Mammary epithelial cell (primary cell): ENCODE measurements at regions of chr21 and their contacts with region 1.

Region 1: GRCh38 chr21:34801519-34802132 is 132.8 kb downstream of the CLIC6 start:
- DNase-seq: no peak
- H3K4me3 ChIP-seq: no peak overlapping the region
- H3K27ac ChIP-seq: peak overlapping the region; percentile 94
- H3K4me1 ChIP-seq: peaks cover 80% of the 10 kb centered on the region
- H3K27me3 ChIP-seq: no peaks in the 10 kb centered on the region
- CTCF ChIP-seq: peak in 1 of 2 donors; percentile 34

Region 2: GRCh38 chr21:34845521-34846451 is 44.2 kb after region 1 on chr21:
- CTCF ChIA-PET with region 1: no interaction called
- dilution Hi-C with region 1: no loop called
- in situ Hi-C with region 1: no loop called
- intact Hi-C with region 1: loop called (anchors 2 kb)
- DNase-seq: peak; percentile 95
- H3K4me3 ChIP-seq: no peak overlapping the region
- H3K27ac ChIP-seq: peak overlapping the region; percentile 74
- H3K4me1 ChIP-seq: peaks cover 47% of the 10 kb centered on the region
- H3K27me3 ChIP-seq: no peaks in the 10 kb centered on the region
- CTCF ChIP-seq: no peak